ENCODE measurements at regions of chr18 and their contacts with region 1.

Region 1: DNA sequence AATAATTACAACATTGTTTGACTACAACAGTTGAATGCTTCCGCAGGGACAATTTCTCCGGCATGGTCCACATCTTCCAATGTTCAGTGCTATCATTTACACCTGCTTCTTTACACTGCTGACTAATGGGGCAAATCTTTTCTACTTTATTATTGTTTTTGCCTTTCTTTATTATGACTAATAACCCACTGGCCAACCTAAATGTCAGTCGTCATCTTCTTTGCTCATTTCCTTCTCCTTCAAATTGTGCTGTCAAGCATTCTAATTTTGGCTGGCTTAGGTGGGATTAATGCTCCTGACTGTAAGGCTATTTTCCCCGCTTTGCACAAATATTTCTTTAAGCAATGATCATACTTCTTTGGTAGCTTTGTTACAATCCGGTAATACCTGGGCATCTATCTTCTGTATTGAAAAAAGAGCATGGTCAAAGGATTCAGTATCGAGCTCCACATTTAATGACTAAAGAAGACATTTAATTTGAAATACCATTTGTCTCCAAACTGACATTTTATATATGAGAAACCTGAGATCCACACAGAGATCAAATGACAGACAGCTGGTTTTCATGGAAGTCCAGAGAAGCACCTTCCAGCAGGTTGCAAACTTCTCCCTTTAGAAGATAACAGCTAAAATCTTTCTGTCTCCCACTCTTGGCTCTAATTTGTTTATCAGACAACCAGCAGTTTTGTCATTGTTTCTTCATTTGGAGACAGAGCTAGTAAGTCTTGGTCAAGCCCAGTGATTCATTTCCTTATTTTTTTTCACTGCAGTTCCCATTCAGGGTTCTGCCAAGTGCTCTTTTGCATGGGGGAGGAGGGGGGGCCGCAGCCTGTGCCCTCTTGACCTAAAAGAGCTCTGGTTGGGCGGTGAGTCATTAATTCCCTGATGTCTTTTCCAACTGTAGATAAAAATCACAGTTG is 132.9 kb downstream of the SOCS6 start:
- DNase-seq: peak; percentile 93 to 97 (median 97)
- H3K4me3 ChIP-seq: peak overlapping the region in 1 of 3 experiments; percentile 32
- H3K4me3 Mint-ChIP-seq: peak overlapping the region in 1 of 2 donors; percentile 46
- H3K27ac ChIP-seq: peak overlapping the region; percentile 40 to 95
- H3K27ac Mint-ChIP-seq: peak overlapping the region; percentile 92 to 99 (median 95)
- H3K4me1 ChIP-seq: peaks cover 42 to 44% of the 10 kb centered on the region in 2 donors
- H3K4me1 Mint-ChIP-seq: peaks cover 46% of the 10 kb centered on the region
- H3K27me3 ChIP-seq: no peaks in the 10 kb centered on the region
- H3K27me3 Mint-ChIP-seq: no peaks in the 10 kb centered on the region
- CTCF ChIP-seq: no peak

Region 2: DNA sequence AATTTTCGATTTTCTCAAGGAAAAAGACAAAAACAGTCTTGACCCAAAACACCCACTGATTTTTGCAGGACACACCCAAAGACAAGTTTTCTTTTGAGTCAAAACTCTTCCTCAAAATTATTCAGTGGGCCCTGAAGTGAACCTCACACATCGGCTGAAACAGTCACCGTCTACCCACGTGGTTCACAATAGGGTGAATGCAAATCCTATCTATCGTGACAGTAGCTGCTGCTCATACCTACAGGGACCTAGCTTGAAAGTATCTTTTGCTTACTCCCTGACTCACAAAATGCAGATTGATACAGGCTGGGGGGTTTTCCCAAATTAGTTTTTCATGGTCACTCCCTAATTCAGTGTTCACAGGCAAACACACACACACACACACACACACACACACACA is 463.3 kb before region 1 on chr18:
- intact Hi-C with region 1: loop called in 1 of 2 experiments (anchors 5 kb)
- DNase-seq: peak; percentile 30 to 82 (median 60)
- H3K4me3 ChIP-seq: no peak overlapping the region
- H3K4me3 Mint-ChIP-seq: no peak overlapping the region
- H3K27ac ChIP-seq: peak overlapping the region; percentile 23 to 87
- H3K27ac Mint-ChIP-seq: peak overlapping the region in 5 of 7 donors; percentile 84 to 92 (median 90)
- H3K4me1 ChIP-seq: peaks cover 37 to 38% of the 10 kb centered on the region in 2 donors
- H3K4me1 Mint-ChIP-seq: peaks cover 2% of the 10 kb centered on the region
- H3K27me3 ChIP-seq: no peaks in the 10 kb centered on the region
- H3K27me3 Mint-ChIP-seq: peaks cover 0 to under 1% (median 0%) of the 10 kb centered on the region in 3 donors
- CTCF ChIP-seq: no peak